HCT116 (cell line): ENCODE measurements at regions of chr7 and their contacts with region 1.

Region 1: DNA sequence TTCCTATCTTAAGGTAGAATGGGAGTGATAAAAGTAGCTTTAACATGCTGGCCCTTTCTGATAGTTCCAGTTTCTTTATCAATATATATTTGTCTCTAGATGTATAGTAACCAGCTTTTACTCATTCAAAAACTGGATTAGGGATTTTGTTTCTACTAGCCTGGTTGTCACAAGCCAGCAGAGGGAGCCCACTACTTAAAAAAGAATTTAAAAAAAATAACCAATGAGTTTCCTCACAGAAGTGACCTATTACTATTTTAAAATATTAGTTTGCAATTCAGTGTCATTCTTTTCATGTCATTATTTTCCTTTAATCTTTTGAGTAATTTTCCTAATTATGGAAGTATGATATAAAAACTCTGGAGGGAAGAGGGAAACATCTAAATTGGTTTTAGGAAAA is 142.1 kb downstream of the PHTF2 start:
- DNase-seq: peak; percentile 6
- ATAC-seq: no peak
- H3K4me3 ChIP-seq: no peak overlapping the region
- H3K27ac ChIP-seq: no peak overlapping the region
- H3K4me1 ChIP-seq: no peaks in the 10 kb centered on the region
- H3K27me3 ChIP-seq: no peaks in the 10 kb centered on the region
- CTCF ChIP-seq: peak; percentile 54 to 74 (median 63)
- POLR2A ChIP-seq: no peak
- RAD21 ChIP-seq: peak; percentile 65

Region 2: GRCh38 chr7:77383333-77383740 is 557.3 kb before region 1 on chr7:
- CTCF ChIA-PET with region 1: no interaction called
- POLR2A ChIA-PET with region 1: no interaction called
- RAD21 ChIA-PET with region 1: no interaction called
- intact Hi-C with region 1: no loop called
- DNase-seq: no peak
- ATAC-seq: no peak
- H3K4me3 ChIP-seq: no peak overlapping the region
- H3K27ac ChIP-seq: no peak overlapping the region
- H3K4me1 ChIP-seq: no peaks in the 10 kb centered on the region
- H3K27me3 ChIP-seq: peaks cover 9% of the 10 kb centered on the region; the same call in 1 of the 2 replicates
- CTCF ChIP-seq: no peak
- POLR2A ChIP-seq: no peak
- RAD21 ChIP-seq: no peak

Region 3: DNA sequence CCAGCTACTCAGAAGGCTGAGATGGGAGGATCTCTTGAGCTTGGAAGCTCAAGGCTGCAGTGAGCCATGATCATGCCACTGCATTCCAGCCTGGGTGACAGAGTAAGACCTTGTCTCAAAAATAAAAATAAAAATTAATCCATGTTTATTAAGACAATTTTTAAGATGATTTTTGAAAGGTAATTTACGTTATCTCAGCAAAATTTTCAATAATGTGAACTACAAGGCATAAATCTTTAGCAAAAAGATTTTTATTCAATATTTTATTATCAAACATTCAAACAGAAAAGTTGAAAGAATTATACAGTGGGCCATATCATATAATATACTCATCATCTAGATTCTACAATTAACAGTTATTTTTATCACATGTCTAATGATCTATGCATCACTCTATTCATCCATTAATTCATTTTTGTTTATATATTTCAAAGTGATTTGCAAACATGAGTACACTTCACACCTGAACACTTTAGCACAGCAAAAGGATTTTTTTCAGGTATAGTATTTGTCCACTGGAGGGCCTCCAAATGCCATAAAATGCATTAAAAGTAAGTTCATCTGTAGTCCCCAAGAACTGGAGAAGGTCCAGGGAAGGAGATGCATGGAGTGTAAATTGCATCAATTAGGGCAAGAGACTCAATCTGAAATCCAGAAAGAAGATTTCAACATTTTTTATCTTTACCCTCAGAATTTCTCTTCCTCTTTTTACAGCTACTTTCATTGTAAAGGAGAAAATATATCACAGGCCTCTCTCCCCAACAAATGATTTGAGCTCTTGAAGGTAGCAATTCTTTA is 283.0 kb before region 1 on chr7:
- CTCF ChIA-PET with region 1: interaction called, 3 read pairs
- POLR2A ChIA-PET with region 1: no interaction called
- RAD21 ChIA-PET with region 1: no interaction called
- intact Hi-C with region 1: loop called (anchors 1 kb)
- DNase-seq: peak; percentile 35
- ATAC-seq: peak; percentile 78
- H3K4me3 ChIP-seq: no peak overlapping the region
- H3K27ac ChIP-seq: no peak overlapping the region
- H3K4me1 ChIP-seq: no peaks in the 10 kb centered on the region
- H3K27me3 ChIP-seq: no peaks in the 10 kb centered on the region
- CTCF ChIP-seq: peak; percentile 43 to 75 (median 58); a peak in 5 of 6 replicates
- POLR2A ChIP-seq: no peak
- RAD21 ChIP-seq: peak; percentile 85

Region 4: DNA sequence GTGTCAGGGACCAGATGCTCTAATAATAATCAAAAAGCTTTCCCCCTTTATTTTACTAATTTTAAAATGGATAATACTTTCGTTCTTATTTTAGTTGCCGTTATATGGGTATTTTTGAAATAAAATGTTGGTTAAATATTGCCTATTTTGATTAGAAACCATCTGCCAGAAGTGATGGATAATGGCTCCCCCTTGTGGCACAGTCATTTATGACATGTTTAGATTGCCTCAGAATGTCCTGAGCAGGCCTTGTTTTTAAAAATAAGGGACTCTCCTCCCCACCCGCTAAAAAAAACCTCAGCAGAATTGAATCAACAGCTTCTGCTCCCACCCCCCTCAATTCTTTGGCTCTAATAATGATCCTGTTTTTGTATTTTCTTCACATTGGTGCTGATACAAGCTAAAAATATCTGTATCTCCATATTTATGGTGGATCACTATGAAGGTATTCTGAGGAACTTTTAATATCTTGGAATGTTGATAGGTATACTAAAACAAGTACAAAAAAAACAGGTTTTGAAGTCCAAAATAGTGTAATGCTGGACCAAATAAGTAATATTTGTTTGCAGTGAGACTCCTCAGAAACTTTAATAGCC is 181.3 kb before region 1 on chr7:
- CTCF ChIA-PET with region 1: no interaction called
- POLR2A ChIA-PET with region 1: no interaction called
- RAD21 ChIA-PET with region 1: no interaction called
- intact Hi-C with region 1: loop called (anchors 2 kb)
- DNase-seq: peak; percentile 57
- ATAC-seq: peak; percentile 78
- H3K4me3 ChIP-seq: no peak overlapping the region
- H3K27ac ChIP-seq: no peak overlapping the region
- H3K4me1 ChIP-seq: no peaks in the 10 kb centered on the region
- H3K27me3 ChIP-seq: no peaks in the 10 kb centered on the region
- CTCF ChIP-seq: peak; percentile 67 to 80 (median 79); a peak in 5 of 6 replicates
- POLR2A ChIP-seq: no peak
- RAD21 ChIP-seq: peak; percentile 89

Region 5: GRCh38 chr7:78039790-78040776 is 99.4 kb after region 1 on chr7:
- CTCF ChIA-PET with region 1: interaction called, 5 read pairs
- POLR2A ChIA-PET with region 1: no interaction called
- RAD21 ChIA-PET with region 1: interaction called in 1 of 2 experiments, 3 read pairs
- intact Hi-C with region 1: loop called (anchors 1 kb)
- DNase-seq: peak; percentile 23
- ATAC-seq: peak; percentile 99
- H3K4me3 ChIP-seq: peak overlapping the region in 1 of 2 experiments; percentile 42; a peak in 2 of 4 replicates
- H3K27ac ChIP-seq: no peak overlapping the region
- H3K4me1 ChIP-seq: peaks cover 0 to 8% of the 10 kb centered on the region in 2 experiments; a peak in 2 of 4 replicates
- H3K27me3 ChIP-seq: no peaks in the 10 kb centered on the region
- CTCF ChIP-seq: peak; percentile 69 to 92 (median 81)
- POLR2A ChIP-seq: no peak
- RAD21 ChIP-seq: peak; percentile 64

Region 6: GRCh38 chr7:78226059-78226719 is 285.5 kb after region 1 on chr7:
- CTCF ChIA-PET with region 1: no interaction called
- POLR2A ChIA-PET with region 1: no interaction called
- RAD21 ChIA-PET with region 1: no interaction called
- intact Hi-C with region 1: loop called (anchors 2 kb)
- DNase-seq: peak; percentile 22
- ATAC-seq: peak; percentile 78
- H3K4me3 ChIP-seq: no peak overlapping the region
- H3K27ac ChIP-seq: no peak overlapping the region
- H3K4me1 ChIP-seq: no peaks in the 10 kb centered on the region
- H3K27me3 ChIP-seq: peaks cover 22% of the 10 kb centered on the region
- CTCF ChIP-seq: peak; percentile 44 to 75 (median 67); a peak in 5 of 6 replicates
- POLR2A ChIP-seq: no peak
- RAD21 ChIP-seq: peak; percentile 55

Region 7: DNA sequence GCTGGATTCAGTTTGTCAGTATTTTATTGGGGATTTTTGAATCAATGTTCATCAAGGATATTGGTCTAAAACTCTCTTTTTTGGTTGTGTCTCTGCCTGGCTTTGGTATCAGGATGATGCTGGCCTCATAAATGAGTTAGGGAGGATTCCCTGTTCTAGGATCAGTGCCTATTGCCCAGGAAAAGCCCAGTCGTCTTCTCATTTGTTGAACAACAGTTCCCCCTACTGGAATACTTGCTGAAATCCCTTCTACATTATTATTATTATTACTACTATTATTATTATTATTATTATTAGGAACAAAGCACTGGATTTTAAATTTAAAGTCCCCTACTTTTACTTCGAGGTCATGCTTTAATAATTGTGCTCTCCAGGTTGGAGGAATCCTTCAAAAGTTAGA is 983.9 kb after region 1 on chr7:
- CTCF ChIA-PET with region 1: no interaction called
- POLR2A ChIA-PET with region 1: no interaction called
- RAD21 ChIA-PET with region 1: no interaction called
- intact Hi-C with region 1: loop called (anchors 2 kb)
- DNase-seq: peak; percentile 15
- ATAC-seq: no peak
- H3K4me3 ChIP-seq: no peak overlapping the region
- H3K27ac ChIP-seq: no peak overlapping the region
- H3K4me1 ChIP-seq: no peaks in the 10 kb centered on the region
- H3K27me3 ChIP-seq: no peaks in the 10 kb centered on the region
- CTCF ChIP-seq: peak in 2 of 3 experiments; percentile 22 to 35; a peak in 1 of 6 replicates
- POLR2A ChIP-seq: no peak
- RAD21 ChIP-seq: peak; percentile 61